Activated CD4-positive, alpha-beta T cell treated with anti-CD3 and anti-CD28 coated beads for 36 hours (primary cell): ENCODE measurements at regions of chr4 and their contacts with region 1.

Region 1: DNA sequence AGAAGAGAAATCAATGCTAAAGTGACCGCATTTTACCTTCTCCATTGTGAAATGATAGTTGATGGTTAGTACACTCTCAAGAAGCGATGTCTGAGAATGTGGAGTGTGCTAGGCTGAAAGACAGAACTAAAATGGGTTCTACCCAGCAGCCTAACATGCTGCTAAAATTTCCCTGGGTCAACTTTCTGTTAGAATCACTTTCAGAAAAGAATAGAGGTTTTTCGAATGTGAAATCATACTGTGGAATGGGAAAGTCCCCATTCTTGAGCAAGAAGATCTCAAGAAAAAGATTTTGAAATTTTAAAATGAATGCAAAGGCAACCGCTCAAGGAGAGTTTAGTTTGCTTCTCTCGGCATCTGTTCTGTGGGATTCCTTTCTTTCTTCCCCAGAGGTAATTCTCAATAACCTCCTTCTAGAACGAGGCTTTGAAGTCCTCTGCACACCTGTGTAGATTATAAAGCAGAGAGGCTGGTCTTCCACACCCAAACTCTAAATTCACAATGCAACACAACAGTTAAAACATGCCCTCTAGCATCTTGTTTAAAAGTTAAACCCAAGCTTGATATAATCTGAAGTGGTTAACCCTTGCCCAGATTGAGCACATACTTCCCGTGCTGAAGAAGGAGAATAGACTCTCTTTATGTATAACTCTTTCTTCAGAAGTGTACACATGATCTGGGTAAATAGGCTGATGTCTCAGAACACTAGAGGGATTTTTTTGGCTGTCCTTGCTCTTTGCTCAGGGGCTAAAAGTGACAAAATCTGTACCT is 208.7 kb upstream of the KLF3 start:
- DNase-seq: no peak
- ATAC-seq: peak; percentile 72
- H3K4me3 Mint-ChIP-seq: peak overlapping the region; percentile 2
- H3K27ac Mint-ChIP-seq: peak overlapping the region; percentile 57
- H3K4me1 Mint-ChIP-seq: peaks cover 54% of the 10 kb centered on the region
- H3K27me3 Mint-ChIP-seq: peaks cover 12% of the 10 kb centered on the region

Region 2: DNA sequence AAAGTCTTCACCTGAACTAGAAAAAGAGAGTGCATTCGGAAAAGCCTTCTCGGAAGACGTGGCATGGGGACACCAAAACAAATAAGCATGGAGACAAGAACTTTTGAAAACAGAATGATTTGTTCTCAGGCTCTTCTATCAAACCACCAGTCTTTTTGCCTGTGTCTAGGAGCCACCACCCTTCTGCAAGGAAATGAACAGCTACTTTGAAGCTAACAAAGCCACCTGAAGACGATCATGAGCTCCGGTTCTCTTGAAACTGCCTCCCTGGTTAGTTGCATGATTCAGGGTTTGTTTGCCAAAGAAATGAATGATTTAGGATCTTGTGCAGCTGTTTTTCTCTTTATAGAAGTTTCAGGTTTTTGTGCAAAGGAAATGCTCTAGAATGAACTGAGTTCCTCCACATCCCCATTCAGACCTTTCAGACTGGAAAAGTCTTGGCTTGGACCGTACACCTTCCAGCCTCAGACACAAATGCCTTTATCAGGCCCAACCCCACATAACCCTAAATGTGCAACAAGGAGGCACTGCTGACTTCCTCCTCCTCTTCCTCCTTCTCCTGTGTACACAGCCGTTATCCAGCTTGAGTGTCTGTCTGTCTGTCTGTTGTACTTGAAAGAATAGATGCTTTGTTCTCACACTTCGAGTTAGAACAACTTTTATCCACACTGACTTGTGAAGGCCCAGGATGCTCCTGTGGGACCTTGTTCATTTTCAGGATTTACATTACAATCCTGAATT is 126.1 kb before region 1 on chr4:
- CTCF ChIA-PET with region 1: no interaction called
- POLR2A ChIA-PET with region 1: no interaction called
- intact Hi-C with region 1: loop called in 1 of 2 experiments (anchors 5 kb)
- DNase-seq: peak; percentile 25
- ATAC-seq: peak; percentile 65
- H3K4me3 Mint-ChIP-seq: no peak overlapping the region
- H3K27ac Mint-ChIP-seq: no peak overlapping the region
- H3K4me1 Mint-ChIP-seq: peaks cover 68% of the 10 kb centered on the region
- H3K27me3 Mint-ChIP-seq: peaks cover 20% of the 10 kb centered on the region

Region 3: DNA sequence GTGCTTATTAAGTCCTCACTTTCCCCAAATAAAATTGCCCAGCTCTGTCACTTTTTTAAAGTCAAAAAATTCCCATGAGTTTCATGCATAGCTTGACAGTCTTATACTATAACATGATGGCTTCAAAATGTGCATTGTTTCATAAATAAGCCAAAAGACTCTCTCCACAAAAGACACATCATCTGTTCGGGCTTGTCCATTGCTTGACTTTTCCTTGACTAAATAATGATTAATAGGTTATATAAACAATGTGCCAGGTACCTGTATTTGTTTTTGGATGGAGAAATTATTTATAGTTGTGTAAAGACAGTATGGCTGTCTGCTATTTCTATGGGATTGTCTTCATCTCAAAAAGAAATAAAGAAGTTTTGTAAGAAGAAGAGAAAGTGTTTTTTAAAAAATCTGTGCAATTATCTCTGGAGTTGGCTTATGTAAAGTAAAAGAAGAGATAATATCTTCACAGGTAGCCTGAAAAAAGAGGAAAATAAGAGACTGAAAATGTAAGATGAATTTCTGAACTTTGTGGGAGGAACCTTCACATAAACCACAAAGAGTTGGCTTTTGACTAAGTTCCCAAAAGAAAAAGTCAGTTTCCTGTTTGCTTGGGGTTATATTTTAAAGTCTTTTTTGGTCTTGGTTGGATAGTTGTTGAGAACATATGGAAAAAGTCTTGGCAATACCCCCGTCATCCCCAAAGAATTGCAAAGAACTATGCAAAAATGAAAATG is 120.3 kb before region 1 on chr4:
- CTCF ChIA-PET with region 1: no interaction called
- POLR2A ChIA-PET with region 1: no interaction called
- intact Hi-C with region 1: loop called in 1 of 2 experiments (anchors 5 kb)
- DNase-seq: no peak
- ATAC-seq: peak; percentile 60
- H3K4me3 Mint-ChIP-seq: peak overlapping the region; percentile 13
- H3K27ac Mint-ChIP-seq: peak overlapping the region; percentile 8
- H3K4me1 Mint-ChIP-seq: peaks cover 50% of the 10 kb centered on the region
- H3K27me3 Mint-ChIP-seq: peaks cover 13% of the 10 kb centered on the region

Region 4: DNA sequence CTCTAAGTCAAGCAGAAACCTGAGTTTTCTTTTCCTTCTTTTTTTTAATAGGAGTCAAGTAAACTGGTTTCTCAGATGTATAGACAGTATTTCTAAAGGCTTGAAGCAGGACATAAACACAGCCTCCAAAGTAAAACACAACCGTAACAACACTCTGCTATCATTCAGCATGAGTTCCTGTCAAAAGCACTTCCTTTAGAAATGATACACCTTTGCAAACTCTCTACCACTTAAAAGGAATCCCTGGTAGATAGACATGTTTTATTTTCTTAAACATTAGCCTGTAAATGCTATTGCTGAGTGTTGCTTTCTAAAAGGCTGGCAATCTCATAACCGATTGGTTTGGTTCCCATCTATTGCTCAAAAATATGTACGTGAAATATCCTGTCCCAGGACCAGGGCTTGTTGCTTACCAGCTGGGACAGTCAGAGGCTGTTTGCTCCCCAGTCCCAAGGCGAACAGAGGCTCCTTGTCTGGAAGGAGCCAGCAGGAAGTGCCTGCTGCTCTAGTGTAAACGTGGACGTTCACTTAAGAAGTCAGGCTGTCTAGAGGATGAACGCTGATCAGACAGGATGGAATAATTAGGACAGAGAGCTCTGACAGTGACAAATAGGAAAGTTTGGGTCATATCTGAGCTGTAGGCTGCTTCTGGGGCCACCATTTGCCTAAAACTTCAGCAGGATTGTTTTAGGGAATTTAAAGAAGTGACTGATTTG is 34.8 kb after region 1 on chr4:
- CTCF ChIA-PET with region 1: no interaction called
- POLR2A ChIA-PET with region 1: no interaction called
- intact Hi-C with region 1: loop called in 1 of 2 experiments (anchors 5 kb)
- DNase-seq: peak; percentile 29
- ATAC-seq: peak; percentile 87
- H3K4me3 Mint-ChIP-seq: peak overlapping the region; percentile 52
- H3K27ac Mint-ChIP-seq: peak overlapping the region; percentile 88
- H3K4me1 Mint-ChIP-seq: peaks cover 38% of the 10 kb centered on the region
- H3K27me3 Mint-ChIP-seq: no peaks in the 10 kb centered on the region